ENCODE measurements at regions of chr10 and their contacts with region 1.

Region 1: GRCh38 chr10:123229927-123230632 is 75.9 kb downstream of the BUB3 start:
- DNase-seq: no peak
- ATAC-seq: no peak
- H3K4me3 ChIP-seq: no peak overlapping the region
- H3K4me3 Mint-ChIP-seq: no peak overlapping the region
- H3K27ac ChIP-seq: no peak overlapping the region
- H3K27ac Mint-ChIP-seq: no peak overlapping the region
- H3K4me1 ChIP-seq: no peaks in the 10 kb centered on the region
- H3K4me1 Mint-ChIP-seq: no peaks in the 10 kb centered on the region
- H3K27me3 ChIP-seq: no peaks in the 10 kb centered on the region
- H3K27me3 Mint-ChIP-seq: no peaks in the 10 kb centered on the region
- CTCF ChIP-seq: no peak

Region 2: GRCh38 chr10:123272171-123272570 is 42.1 kb after region 1 on chr10:
- CTCF ChIA-PET with region 1: interaction called, 3 read pairs
- POLR2A ChIA-PET with region 1: no interaction called
- intact Hi-C with region 1: loop called in 1 of 2 experiments (anchors 5 kb)
- DNase-seq: peak in 1 of 9 experiments; percentile 18
- ATAC-seq: no peak
- H3K4me3 ChIP-seq: no peak overlapping the region
- H3K4me3 Mint-ChIP-seq: no peak overlapping the region
- H3K27ac ChIP-seq: no peak overlapping the region
- H3K27ac Mint-ChIP-seq: no peak overlapping the region
- H3K4me1 ChIP-seq: no peaks in the 10 kb centered on the region
- H3K4me1 Mint-ChIP-seq: peaks cover 9% of the 10 kb centered on the region
- H3K27me3 ChIP-seq: no peaks in the 10 kb centered on the region
- H3K27me3 Mint-ChIP-seq: peaks cover 29% of the 10 kb centered on the region
- CTCF ChIP-seq: peak; percentile 35